Cardiac septum (tissue), 1 donor: ENCODE measurements at regions of chr19 and their contacts with region 1.

Region 1: GRCh38 chr19:54203151-54203611 is 2.5 kb downstream of the RPS9 start:
- DNase-seq: no peak

Region 2: GRCh38 chr19:54159352-54160181 is 43.6 kb before region 1 on chr19 and contains the start of gene LENG1:
- intact Hi-C with region 1: loop called (anchors 5 kb)
- DNase-seq: peak; percentile 99
- total RNA-seq, gene LENG1: 8.3 TPM

Region 3: DNA sequence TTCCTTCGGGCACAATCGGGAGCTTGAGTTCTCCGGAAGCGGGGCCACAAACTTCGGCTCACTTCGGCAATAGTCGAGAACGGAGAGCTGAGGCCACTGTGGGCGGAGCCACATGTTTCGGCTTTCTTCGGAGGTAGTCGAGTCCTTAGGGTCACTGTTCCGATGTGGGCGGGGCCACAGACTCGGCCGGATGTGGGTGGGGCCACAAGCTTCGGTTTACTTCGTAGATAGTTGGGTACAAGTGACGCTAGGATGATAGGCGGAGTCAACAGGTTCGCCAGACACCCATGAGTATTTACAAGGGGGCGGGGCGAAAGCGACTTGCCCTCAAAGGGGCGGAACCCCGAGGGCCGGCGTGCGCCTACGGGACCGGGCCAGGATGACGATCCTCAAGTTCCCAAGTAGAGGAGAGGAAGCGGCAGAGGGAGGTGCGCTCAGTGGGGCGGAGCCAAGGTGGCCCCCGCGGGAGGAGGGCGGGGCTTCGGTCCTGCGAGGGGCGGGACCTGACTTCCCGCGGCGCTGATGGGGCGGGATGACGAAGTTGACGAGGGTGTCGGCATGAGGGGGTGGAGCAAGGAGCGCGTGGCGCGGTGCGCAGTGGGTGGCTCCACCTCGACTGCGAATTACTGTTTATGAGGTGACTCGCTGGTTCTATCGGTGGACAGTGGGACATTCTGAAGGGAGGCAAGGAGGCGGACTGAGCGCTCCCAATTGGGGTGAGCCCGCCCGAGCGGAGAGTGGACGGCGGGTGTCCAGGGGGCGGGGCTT is 13.3 kb before region 1 on chr19:
- intact Hi-C with region 1: loop called (anchors 1 kb)
- DNase-seq: peak; percentile 100

Region 4: DNA sequence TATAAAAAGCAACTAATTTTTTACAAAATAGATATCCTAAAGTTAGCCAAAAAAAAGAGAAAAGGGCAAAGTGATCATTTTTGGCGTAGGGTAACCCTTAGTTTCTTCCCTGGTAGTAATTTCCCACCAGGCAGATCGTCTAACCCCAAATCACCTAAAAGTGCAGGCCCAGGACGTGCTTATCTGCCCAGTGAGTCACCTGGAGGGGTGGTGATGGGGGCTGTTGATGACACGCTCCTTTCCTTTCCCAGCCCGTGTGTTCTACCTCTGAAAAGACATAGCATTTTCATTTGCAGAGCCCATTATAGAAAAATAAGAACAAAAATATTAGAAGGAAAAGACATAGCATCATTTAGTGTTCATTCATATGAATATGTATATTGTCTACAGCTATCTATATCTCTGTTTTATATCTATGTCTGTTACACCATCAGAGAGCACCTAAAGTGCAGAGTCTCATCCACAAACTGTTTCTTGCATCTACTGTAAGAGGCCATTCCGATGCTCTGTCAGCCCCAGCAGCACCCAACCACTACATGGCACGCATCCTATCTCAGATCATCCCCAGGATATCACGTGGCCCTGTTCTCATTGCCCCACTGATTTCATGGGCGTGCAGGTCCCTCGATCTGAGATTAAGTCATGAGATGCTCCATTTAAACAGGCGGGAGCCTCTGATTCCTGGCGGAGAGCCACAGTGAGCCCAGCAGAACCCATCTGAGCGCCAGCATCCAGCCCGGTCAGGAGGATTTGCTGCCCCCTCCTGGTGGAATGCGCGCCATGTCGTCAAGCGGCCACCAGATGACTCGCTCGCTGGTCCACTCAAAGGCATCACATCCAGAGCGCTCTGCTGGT is 28.1 kb after region 1 on chr19:
- intact Hi-C with region 1: no loop called
- DNase-seq: peak; percentile 95